WTC11 (cell line): ENCODE measurements at regions of chr11 and their contacts with region 1.

Region 1: GRCh38 chr11:67265633-67266423 is 445 bp upstream of the GRK2 start:
- DNase-seq: peak; percentile 86
- ATAC-seq: peak; percentile 45
- H3K4me3 Mint-ChIP-seq: peak overlapping the region; percentile 70
- H3K27ac Mint-ChIP-seq: peak overlapping the region; percentile 63
- H3K4me1 Mint-ChIP-seq: peaks cover 48% of the 10 kb centered on the region
- H3K27me3 Mint-ChIP-seq: peaks cover 25% of the 10 kb centered on the region
- CTCF ChIP-seq: peak; percentile 69; the same call in 1 of the 2 replicates

Region 2: DNA sequence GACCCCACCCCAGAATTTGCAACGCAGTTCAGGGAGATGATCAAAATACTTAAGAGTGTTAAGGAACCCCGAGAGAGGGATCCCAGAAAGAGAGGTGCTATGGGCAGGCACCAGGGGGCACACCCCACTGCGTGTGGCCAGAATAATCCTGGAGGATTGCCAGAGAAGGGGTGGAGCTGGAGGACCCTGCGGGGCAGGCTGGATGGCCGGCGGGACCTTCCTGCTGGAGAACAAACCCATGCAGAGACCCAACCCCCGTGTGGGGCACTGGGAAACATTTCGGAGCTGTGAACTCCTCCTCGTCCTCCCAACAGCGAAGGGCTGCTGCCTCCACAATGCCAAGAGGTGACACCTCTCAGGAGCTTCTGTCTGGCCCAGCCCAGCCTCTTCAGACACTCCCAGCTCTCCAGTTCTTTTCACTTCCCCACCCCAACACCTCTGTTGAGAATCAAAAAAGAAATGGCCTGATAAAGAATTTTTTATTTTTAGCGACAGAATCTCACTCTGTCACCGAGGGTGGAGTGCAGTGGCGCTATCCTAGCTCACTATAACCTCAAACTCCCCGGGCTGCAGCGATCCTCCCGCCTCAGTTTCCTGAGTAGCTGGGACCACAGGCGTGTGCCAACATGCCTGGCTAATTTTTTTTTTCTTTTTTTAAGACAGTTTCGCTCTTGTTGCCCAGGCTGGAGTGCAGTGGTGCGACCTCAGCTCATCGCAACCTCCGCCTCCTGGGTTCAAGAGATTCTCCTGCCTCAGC is 183.6 kb before region 1 on chr11:
- CTCF ChIA-PET with region 1: interaction called, 28 read pairs
- POLR2A ChIA-PET with region 1: no interaction called
- DNase-seq: peak; percentile 52
- ATAC-seq: peak; percentile 61
- H3K4me3 Mint-ChIP-seq: peak overlapping the region; percentile 62
- H3K27ac Mint-ChIP-seq: no peak overlapping the region
- H3K4me1 Mint-ChIP-seq: peaks cover 24% of the 10 kb centered on the region
- H3K27me3 Mint-ChIP-seq: no peaks in the 10 kb centered on the region
- CTCF ChIP-seq: no peak

Region 3: DNA sequence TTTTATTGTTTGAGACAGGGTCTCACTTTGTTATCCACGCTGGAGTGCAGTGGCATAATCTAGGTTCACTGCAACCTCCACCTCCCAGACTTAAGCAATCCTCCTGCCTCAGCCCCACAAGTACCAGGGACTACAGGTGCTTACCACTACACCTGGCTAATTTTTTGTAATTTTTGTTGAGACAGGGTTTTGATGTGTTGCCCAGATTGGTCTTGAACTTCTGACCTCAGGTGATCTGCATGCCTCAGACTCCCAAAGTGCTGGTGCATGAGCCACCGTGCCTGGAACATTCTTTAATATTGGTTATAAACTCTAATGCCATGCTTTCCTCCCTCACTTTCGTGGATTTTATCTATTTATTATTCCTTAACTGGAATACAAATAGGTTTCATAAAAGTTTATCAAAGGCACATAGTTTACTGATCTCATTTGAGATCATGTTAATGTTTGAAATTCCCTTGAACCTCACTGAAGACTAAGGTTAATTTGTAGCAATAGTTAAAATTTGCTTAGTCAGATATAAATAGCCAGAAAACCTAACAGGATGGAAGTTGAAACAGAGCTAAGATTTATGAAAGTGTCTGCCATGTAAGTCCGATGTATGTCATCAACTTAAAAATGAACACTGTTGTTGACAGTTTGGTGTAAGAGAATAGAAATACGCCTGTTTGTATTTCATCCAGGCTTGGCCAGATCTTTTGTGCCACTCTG is 119.2 kb before region 1 on chr11:
- CTCF ChIA-PET with region 1: no interaction called
- POLR2A ChIA-PET with region 1: no interaction called
- DNase-seq: no peak
- ATAC-seq: no peak
- H3K4me3 Mint-ChIP-seq: no peak overlapping the region
- H3K27ac Mint-ChIP-seq: peak overlapping the region; percentile 70; the same call in 1 of the 2 replicates
- H3K4me1 Mint-ChIP-seq: peaks cover 3% of the 10 kb centered on the region; the same call in 1 of the 2 replicates
- H3K27me3 Mint-ChIP-seq: no peaks in the 10 kb centered on the region
- CTCF ChIP-seq: no peak

Region 4: DNA sequence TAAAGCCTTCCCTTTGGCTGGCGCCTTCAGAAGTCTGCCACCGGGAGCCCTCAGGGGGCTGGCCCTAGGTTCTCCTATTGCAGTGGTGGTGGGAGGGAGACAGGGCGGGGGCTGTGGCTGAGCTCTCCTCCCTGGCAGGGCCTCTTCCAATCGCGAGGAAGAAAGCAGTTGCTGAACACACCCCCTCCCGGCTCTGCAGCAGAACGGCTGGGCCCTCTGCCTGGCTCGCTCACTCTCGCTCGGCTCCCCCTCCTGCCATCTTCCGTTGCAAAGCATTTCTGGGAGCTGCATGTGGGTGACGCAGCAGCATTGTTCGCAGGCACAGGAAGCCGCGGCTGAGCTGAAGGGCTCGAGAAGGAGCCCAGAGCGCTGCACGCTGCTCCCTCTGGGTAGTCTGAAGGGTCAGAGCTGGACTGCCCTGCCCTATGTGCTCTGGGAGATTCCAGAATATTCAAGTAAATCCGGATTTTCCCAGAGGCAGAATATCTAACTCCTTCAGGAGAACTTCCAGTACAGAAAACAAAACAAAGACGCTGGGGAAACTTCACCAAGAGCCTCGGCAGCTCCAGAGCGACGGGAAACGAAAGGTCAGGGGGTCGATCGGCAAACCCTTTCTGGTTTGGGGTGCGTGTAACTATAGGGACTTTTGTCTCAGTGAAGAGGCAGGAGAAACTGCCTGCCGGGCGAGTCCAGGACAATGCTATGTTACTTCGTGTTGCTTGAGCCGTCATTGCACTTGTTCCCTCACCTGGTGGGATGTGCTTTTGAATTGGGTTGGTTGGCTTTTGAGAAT is 25.8 kb before region 1 on chr11:
- CTCF ChIA-PET with region 1: interaction called, 14 read pairs
- POLR2A ChIA-PET with region 1: interaction called, 5 read pairs
- DNase-seq: peak; percentile 98
- ATAC-seq: peak; percentile 98
- H3K4me3 Mint-ChIP-seq: peak overlapping the region; percentile 96
- H3K27ac Mint-ChIP-seq: peak overlapping the region; percentile 98
- H3K4me1 Mint-ChIP-seq: peaks cover 35% of the 10 kb centered on the region
- H3K27me3 Mint-ChIP-seq: no peaks in the 10 kb centered on the region
- CTCF ChIP-seq: no peak

Region 5: DNA sequence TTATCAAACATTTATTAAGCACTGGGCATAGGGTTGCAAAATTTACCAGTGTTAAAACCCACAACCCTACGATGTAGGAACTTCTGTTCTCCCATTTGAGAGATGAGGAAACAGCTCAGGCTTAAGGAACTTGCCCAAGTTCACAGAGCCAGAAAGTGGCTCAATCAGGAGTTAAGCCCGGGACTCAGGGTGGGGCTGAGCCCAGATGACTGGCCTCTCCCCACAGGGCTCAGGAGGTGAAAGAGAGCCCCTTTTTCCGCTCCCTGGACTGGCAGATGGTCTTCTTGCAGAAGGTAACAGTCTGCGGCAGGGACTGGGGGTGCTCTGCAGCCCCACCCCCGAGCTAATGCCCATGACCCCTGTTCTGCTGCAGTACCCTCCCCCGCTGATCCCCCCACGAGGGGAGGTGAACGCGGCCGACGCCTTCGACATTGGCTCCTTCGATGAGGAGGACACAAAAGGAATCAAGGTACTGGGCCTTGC is 17.7 kb after region 1 on chr11:
- CTCF ChIA-PET with region 1: interaction called, 39 read pairs
- POLR2A ChIA-PET with region 1: no interaction called
- DNase-seq: no peak
- ATAC-seq: no peak
- H3K4me3 Mint-ChIP-seq: no peak overlapping the region
- H3K27ac Mint-ChIP-seq: no peak overlapping the region
- H3K4me1 Mint-ChIP-seq: peaks cover 12% of the 10 kb centered on the region
- H3K27me3 Mint-ChIP-seq: no peaks in the 10 kb centered on the region
- CTCF ChIP-seq: no peak

Region 6: DNA sequence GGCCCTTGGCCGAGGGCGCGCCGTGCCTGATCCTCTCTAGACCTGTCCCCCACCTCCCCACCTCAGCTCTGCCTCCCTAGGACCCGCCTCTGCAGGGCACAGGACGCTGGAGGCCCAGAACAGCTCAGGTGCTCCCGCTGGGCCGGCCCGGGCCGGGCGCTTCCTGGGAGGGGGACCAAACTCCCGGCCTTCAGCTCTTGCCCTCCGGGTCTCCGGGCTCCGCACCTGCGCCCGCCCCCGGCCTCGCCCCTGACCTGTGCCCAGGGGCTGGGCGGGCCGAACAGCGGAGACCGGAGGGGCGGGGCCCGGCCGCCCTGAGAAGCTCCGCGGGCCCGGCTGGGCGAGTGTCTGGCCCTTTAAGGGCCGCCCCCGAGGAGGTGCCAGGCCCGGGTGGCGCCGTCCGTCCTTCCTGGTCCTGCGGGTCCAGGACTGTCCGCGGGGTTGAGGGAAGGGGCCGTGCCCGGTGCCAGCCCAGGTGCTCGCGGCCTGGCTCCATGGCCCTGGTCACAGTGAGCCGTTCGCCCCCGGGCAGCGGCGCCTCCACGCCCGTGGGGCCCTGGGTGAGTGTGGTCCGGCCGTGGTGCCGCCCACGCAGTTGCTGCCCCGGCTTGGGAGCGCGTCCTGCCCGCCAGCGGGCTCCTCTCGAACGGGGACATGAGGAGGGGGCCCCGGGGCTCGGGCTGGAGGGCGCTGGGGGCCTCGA is 37.5 kb after region 1 on chr11 and contains the start of gene SSH3:
- CTCF ChIA-PET with region 1: interaction called, 19 read pairs
- POLR2A ChIA-PET with region 1: interaction called, 3 read pairs
- DNase-seq: peak; percentile 78
- ATAC-seq: peak; percentile 82
- H3K4me3 Mint-ChIP-seq: peak within 1 kb of the TSS; percentile 74
- H3K27ac Mint-ChIP-seq: peak within 1 kb of the TSS; percentile 57
- H3K4me1 Mint-ChIP-seq: peaks cover 11% of the 10 kb centered on the region
- H3K27me3 Mint-ChIP-seq: peaks cover 4% of the 10 kb centered on the region; the same call in 1 of the 2 replicates
- CTCF ChIP-seq: no peak
- total RNA-seq, gene SSH3: 34.8 to 43.4 TPM (median 42.3 TPM) in 3 replicates

Region 7: GRCh38 chr11:67345920-67346799 is 80.3 kb after region 1 on chr11:
- CTCF ChIA-PET with region 1: interaction called, 19 read pairs
- POLR2A ChIA-PET with region 1: no interaction called
- DNase-seq: no peak
- ATAC-seq: peak; percentile 82
- H3K4me3 Mint-ChIP-seq: no peak overlapping the region
- H3K27ac Mint-ChIP-seq: peak overlapping the region; percentile 41; the same call in 1 of the 2 replicates
- H3K4me1 Mint-ChIP-seq: peaks cover 9% of the 10 kb centered on the region
- H3K27me3 Mint-ChIP-seq: peaks cover 10% of the 10 kb centered on the region
- CTCF ChIP-seq: 0 out of 2 replicates have a peak, but pooled peaks have one; percentile 43

Region 8: GRCh38 chr11:67382276-67383136 is 116.7 kb after region 1 on chr11:
- CTCF ChIA-PET with region 1: interaction called, 44 read pairs
- POLR2A ChIA-PET with region 1: no interaction called
- DNase-seq: peak; percentile 90
- ATAC-seq: peak; percentile 85
- H3K4me3 Mint-ChIP-seq: no peak overlapping the region
- H3K27ac Mint-ChIP-seq: no peak overlapping the region; the same call in 1 of the 2 replicates
- H3K4me1 Mint-ChIP-seq: peaks cover 17% of the 10 kb centered on the region
- H3K27me3 Mint-ChIP-seq: peaks cover 52% of the 10 kb centered on the region
- CTCF ChIP-seq: peak; percentile 90

Region 9: DNA sequence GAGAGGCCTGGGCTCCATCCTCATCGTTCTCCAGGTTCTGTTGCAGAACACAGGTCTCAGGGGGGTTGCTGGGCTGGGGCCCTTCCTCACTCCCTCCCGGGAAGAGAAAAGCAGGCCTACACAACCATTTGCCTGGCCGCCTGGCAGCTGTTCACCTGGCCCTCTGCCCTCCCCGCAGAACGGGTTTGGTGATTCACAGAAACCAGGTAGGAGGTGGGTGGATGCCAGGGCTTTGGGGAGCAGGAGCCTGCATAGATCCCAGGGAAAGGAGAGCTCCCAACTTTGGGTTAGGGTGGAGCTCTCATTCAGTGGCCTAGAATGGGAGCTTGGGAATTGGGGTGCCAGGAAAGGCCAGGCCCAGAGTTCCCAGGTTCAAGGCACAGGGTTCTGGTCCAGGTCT is 202.2 kb after region 1 on chr11:
- CTCF ChIA-PET with region 1: no interaction called
- POLR2A ChIA-PET with region 1: no interaction called
- DNase-seq: no peak
- ATAC-seq: no peak
- H3K4me3 Mint-ChIP-seq: peak overlapping the region; percentile 87
- H3K27ac Mint-ChIP-seq: 0 out of 2 replicates have a peak overlapping the region, but pooled peaks have one; percentile 42
- H3K4me1 Mint-ChIP-seq: peaks cover 23% of the 10 kb centered on the region
- H3K27me3 Mint-ChIP-seq: peaks cover 12% of the 10 kb centered on the region
- CTCF ChIP-seq: no peak

Region 10: GRCh38 chr11:67534070-67534679 is 268.3 kb after region 1 on chr11:
- CTCF ChIA-PET with region 1: no interaction called
- POLR2A ChIA-PET with region 1: no interaction called
- DNase-seq: no peak
- ATAC-seq: no peak
- H3K4me3 Mint-ChIP-seq: no peak overlapping the region
- H3K27ac Mint-ChIP-seq: no peak overlapping the region
- H3K4me1 Mint-ChIP-seq: no peaks in the 10 kb centered on the region
- H3K27me3 Mint-ChIP-seq: peaks cover 35% of the 10 kb centered on the region
- CTCF ChIP-seq: no peak